Aorta (tissue), 5 donors: ENCODE measurements at regions of chr7 and their contacts with region 1.

Region 1: DNA sequence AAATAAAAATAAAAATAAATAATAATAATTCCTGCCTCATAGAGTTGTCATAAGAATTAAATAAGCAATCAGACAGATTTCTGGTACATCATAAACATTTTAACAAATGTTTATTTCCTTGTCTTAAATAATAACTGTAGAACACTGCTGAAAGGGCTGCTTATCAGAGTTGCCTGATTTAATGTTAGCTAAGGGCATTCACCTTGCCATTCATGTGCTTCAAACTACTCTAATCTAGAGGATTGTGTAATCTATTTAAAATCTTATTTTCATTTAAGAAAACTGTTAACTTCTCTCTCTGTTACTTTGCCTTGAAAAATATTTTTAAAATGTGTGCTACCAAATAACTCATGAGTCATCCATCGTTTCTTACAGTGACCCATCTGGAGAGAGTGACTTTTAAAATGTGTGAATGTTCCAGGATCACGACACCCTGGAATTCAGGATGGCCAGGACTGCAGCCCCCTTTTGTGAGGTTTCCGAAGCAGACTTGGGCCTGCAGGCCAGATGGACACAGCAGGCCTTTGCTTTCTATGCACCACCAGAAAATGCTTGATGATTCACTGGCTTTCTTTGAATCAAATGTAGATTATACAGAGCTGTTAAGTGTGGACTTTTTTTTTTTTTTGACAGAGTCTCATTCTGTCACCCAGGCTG is 109.1 kb upstream of the TNS3 start:
- DNase-seq: no peak
- ATAC-seq: peak; percentile 61
- H3K4me3 ChIP-seq: no peak overlapping the region
- H3K27ac ChIP-seq: peak overlapping the region; percentile 20 to 93
- H3K4me1 ChIP-seq: peaks cover 0 to 1% of the 10 kb centered on the region in 2 donors
- H3K27me3 ChIP-seq: no peaks in the 10 kb centered on the region

Region 2: GRCh38 chr7:47474937-47475878 is 215.8 kb before region 1 on chr7:
- intact Hi-C with region 1: no loop called
- DNase-seq: peak; percentile 92 to 96
- ATAC-seq: peak; percentile 87
- H3K4me3 ChIP-seq: no peak overlapping the region
- H3K27ac ChIP-seq: peak overlapping the region in 1 of 2 donors; percentile 73
- H3K4me1 ChIP-seq: no peaks in the 10 kb centered on the region
- H3K27me3 ChIP-seq: no peaks in the 10 kb centered on the region

Region 3: GRCh38 chr7:47757921-47758411 is 66.9 kb after region 1 on chr7:
- intact Hi-C with region 1: loop called (anchors 5 to 10 kb)
- DNase-seq: peak; percentile 78 to 91
- ATAC-seq: peak; percentile 74
- H3K4me3 ChIP-seq: no peak overlapping the region
- H3K27ac ChIP-seq: peak overlapping the region; percentile 80 to 96
- H3K4me1 ChIP-seq: peaks cover 3 to 5% of the 10 kb centered on the region in 2 donors
- H3K27me3 ChIP-seq: no peaks in the 10 kb centered on the region